K562 (cell line): ENCODE measurements at regions of chr13 and their contacts with region 1.

Region 1: GRCh38 chr13:102207680-102208342 is 194.0 kb downstream of the FGF14 start:
- DNase-seq: no peak
- ATAC-seq: no peak
- H3K4me3 ChIP-seq: no peak overlapping the region
- H3K27ac ChIP-seq: no peak overlapping the region
- H3K4me1 ChIP-seq: no peaks in the 10 kb centered on the region
- H3K27me3 ChIP-seq: no peaks in the 10 kb centered on the region
- CTCF ChIP-seq: no peak
- EP300 ChIP-seq: no peak
- POLR2A ChIP-seq: no peak
- RAD21 ChIP-seq: no peak

Region 2: DNA sequence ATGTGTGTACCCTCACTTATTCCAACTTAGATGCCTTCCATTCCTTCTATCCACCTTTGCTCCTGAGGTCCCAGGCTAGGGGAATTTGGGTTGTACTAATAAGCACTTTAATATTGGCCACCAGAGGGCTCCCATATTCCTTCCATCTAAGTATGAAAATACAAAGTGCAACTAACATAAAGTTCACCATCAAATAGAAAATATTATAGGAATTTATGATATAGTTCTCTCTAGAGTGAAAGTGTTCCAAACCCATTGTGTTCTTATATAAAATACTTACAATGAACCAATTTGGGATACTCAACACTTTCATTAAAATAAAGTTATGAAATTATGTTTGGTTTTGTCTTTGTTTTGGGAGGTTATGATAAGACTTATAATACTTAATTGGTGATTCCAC is 693.0 kb before region 1 on chr13:
- CTCF ChIA-PET with region 1: no interaction called
- POLR2A ChIA-PET with region 1: no interaction called
- in situ Hi-C with region 1: no loop called
- intact Hi-C with region 1: loop called (anchors 5 kb)
- DNase-seq: peak in 3 of 4 experiments; percentile 5 to 8 (median 8)
- ATAC-seq: no peak
- H3K4me3 ChIP-seq: no peak overlapping the region
- H3K27ac ChIP-seq: no peak overlapping the region
- H3K4me1 ChIP-seq: no peaks in the 10 kb centered on the region
- H3K27me3 ChIP-seq: no peaks in the 10 kb centered on the region
- CTCF ChIP-seq: peak in 1 of 3 experiments; percentile 31; a peak in 1 of 6 replicates
- EP300 ChIP-seq: no peak
- POLR2A ChIP-seq: no peak
- RAD21 ChIP-seq: peak in 1 of 2 experiments; percentile 33; a peak in 2 of 4 replicates